Lower leg skin (tissue), 4 donors: ENCODE measurements at regions of chr9 and their contacts with region 1.

Region 1: DNA sequence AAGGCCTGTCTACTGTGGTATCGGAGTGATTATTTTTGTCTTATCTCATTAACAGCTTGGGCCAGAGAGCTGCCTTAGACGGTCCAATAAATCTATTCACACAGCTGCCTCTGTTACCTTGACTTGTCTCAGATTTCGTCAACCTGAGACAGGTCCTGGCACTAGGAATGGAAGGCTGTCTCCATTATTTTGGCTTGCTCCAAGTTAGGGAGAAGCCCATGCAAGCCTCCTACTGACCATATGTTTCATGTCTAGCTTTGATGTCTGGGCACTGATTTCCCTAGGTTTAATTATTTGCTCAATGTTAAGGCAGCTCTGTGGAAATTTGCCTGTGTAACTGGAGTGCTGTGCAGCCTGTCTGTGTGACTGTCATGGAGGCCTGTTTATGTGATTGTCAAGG is 12.4 kb upstream of the RALGPS1 start:
- DNase-seq: no peak
- H3K4me3 ChIP-seq: no peak overlapping the region
- CTCF ChIP-seq: no peak
- POLR2A ChIP-seq: no peak

Region 2: DNA sequence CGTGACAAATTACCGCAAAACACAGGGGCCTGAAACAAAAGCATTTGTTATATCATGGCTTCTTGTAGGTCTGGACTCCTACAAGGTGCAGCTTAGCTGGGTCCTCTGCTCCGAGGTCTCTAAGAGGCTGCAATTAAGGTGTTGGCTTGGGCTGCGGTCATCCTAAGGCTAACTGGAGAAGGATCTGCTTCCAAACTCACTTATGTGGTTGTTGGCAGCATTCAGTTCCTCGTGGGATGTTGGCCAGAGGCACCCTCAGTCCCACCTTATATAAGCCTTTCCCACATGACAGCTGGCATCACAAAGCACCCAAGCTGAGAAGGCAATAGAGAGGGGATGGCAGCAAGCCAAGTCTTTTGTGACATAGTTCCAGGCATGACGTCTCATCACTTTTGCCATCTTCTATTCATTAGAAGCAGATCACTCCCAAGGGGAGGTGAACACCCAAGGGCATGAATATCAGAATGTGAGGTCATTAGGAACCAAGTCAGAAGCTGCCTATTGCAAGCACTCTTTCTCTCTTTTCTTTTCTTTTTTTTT is 145.3 kb before region 1 on chr9:
- intact Hi-C with region 1: no loop called
- DNase-seq: peak in 1 of 2 donors; percentile 76
- H3K4me3 ChIP-seq: no peak overlapping the region
- CTCF ChIP-seq: no peak
- POLR2A ChIP-seq: no peak

Region 3: DNA sequence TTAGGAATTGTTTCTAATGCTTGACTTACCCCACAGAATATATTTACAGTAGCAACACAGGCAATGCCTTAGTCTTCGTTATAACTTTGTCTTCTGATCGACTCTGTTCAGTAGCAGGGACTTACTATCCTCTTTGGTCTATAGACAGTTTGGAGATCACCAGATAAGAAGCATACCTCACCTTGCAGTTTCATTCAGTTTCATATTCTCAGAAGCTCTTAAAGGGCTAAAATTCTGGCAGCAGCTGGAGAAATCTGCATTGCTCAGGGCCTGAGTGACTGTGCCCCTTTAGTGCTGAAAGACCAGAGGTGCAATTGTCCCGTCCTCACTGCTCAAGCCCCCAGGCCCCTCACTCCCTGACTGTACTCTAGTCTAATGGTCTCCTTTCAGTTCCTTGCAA is 71.4 kb before region 1 on chr9:
- intact Hi-C with region 1: no loop called
- DNase-seq: no peak
- H3K4me3 ChIP-seq: no peak overlapping the region
- CTCF ChIP-seq: no peak
- POLR2A ChIP-seq: no peak

Region 4: GRCh38 chr9:128419061-128419925 is 1517.1 kb after region 1 on chr9:
- intact Hi-C with region 1: loop called (anchors 5 kb)
- DNase-seq: no peak
- H3K4me3 ChIP-seq: no peak overlapping the region
- CTCF ChIP-seq: no peak
- POLR2A ChIP-seq: no peak